ENCODE measurements at regions of chr11 and their contacts with region 1.

Region 1: DNA sequence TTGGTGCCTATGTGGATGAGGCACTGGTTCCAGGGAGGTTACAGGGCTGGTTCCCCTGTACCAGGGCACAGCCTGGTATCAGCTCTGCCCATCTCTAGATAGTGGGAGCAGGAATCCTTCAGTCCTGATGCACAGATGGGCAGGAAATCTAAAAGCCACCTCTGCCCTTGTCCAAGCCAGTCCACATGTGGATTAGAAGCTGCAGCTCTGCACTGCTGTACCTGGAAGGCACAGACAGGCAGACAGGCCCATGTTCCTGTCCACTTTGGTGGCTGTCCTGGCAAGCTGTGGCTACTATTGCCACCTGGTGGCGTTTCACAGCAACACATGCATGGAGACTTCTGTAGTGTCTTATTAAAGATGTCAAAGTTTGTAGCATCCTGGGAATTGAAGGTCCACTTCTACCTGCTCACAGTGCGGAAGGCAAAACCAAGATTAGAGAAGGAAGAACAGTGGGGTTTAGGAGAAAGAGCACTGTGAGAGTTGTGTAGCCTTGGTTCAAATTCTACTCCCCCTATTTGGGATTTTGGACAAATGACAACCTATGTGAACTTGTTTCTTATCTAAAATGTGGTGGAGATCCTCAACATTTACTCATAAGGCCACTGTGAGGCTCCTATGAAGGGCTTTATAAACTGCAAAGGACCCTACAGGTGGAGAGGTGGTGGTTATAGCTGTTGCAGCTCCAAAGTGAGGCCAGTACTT is 30.1 kb downstream of the NAV2 start:
- DNase-seq: peak; percentile 88
- ATAC-seq: peak; percentile 88
- H3K4me3 ChIP-seq: no peak overlapping the region
- H3K27ac ChIP-seq: no peak overlapping the region
- H3K4me1 ChIP-seq: 0 out of 2 replicates have a peak, but pooled peaks cover 10% of the 10 kb centered on the region
- H3K27me3 ChIP-seq: no peaks in the 10 kb centered on the region
- CTCF ChIP-seq: peak; percentile 88

Region 2: DNA sequence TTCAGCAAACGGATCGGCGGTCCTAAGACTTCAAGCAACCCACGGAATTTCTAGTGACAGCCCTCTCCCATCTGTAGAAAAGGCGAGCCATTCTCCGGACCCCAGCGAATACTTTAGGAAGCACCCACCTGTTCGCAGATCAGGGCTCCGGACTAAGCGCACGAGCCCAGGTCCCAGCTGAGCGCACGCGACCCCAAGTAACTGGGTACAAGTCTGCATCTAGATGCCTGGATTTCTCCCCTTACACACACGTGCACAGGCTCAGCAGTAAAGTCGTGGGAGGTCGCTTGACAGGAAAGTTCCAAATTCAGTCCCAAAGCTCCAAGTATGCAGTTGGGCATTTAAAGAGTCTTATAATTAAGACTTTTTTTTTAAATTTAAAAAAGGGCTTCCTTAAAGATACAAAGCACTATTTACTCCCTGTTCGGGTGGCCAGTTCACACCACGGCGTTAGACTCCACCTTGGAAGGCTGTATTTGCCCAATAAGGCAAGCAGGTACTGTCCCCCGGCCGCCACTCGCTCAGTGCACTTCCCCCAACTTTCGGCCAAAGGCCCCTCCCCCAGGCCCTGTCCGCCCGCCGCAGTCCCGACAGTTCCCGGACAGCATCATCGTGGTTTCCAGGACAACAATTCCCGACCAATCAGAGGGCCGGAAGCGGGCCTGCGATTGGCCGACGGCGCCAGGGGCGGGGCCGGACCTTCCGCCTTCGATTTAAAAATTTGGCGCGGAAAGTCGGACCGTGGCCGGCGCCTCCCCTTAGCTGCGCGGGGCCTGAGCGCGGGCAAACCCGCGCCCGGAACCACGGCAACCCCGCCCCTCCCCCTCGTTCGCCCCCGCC is 502.1 kb before region 1 on chr11 and contains the start of gene E2F8:
- CTCF ChIA-PET with region 1: no interaction called
- POLR2A ChIA-PET with region 1: no interaction called
- intact Hi-C with region 1: loop called (anchors 10 kb)
- DNase-seq: peak; percentile 97
- ATAC-seq: peak; percentile 87
- H3K4me3 ChIP-seq: peak within 1 kb of the TSS; percentile 90
- H3K27ac ChIP-seq: peak within 1 kb of the TSS; percentile 77
- H3K4me1 ChIP-seq: peaks cover 54% of the 10 kb centered on the region
- H3K27me3 ChIP-seq: no peaks in the 10 kb centered on the region
- CTCF ChIP-seq: no peak
- total RNA-seq, gene E2F8: 11.9 and 12.3 TPM in 2 replicates

Region 3: GRCh38 chr11:19553683-19554333 is 188.9 kb before region 1 on chr11:
- CTCF ChIA-PET with region 1: interaction called, 4 read pairs
- POLR2A ChIA-PET with region 1: no interaction called
- intact Hi-C with region 1: loop called (anchors 1 kb)
- DNase-seq: peak; percentile 86
- ATAC-seq: peak; percentile 71
- H3K4me3 ChIP-seq: no peak overlapping the region
- H3K27ac ChIP-seq: no peak overlapping the region
- H3K4me1 ChIP-seq: no peaks in the 10 kb centered on the region
- H3K27me3 ChIP-seq: no peaks in the 10 kb centered on the region
- CTCF ChIP-seq: peak; percentile 89

Region 4: GRCh38 chr11:19660076-19660475 is 82.7 kb before region 1 on chr11:
- CTCF ChIA-PET with region 1: interaction called, 3 read pairs
- POLR2A ChIA-PET with region 1: no interaction called
- intact Hi-C with region 1: loop called (anchors 5 kb)
- DNase-seq: peak; percentile 97
- ATAC-seq: peak; percentile 97
- H3K4me3 ChIP-seq: no peak overlapping the region
- H3K27ac ChIP-seq: peak overlapping the region; percentile 51
- H3K4me1 ChIP-seq: peaks cover 25% of the 10 kb centered on the region
- H3K27me3 ChIP-seq: no peaks in the 10 kb centered on the region
- CTCF ChIP-seq: no peak

Region 5: GRCh38 chr11:19808076-19808911 is 65.6 kb after region 1 on chr11:
- CTCF ChIA-PET with region 1: no interaction called
- POLR2A ChIA-PET with region 1: no interaction called
- intact Hi-C with region 1: loop called (anchors 1 kb)
- DNase-seq: peak; percentile 21
- ATAC-seq: no peak
- H3K4me3 ChIP-seq: no peak overlapping the region
- H3K27ac ChIP-seq: no peak overlapping the region
- H3K4me1 ChIP-seq: peaks cover 30% of the 10 kb centered on the region
- H3K27me3 ChIP-seq: no peaks in the 10 kb centered on the region
- CTCF ChIP-seq: peak; percentile 56